ENCODE measurements at regions of chr1 and their contacts with region 1.

Region 1: GRCh38 chr1:101567582-101568189 is 330.9 kb downstream of the S1PR1 start:
- DNase-seq: peak; percentile 25
- CTCF ChIP-seq: peak; percentile 90

Region 2: DNA sequence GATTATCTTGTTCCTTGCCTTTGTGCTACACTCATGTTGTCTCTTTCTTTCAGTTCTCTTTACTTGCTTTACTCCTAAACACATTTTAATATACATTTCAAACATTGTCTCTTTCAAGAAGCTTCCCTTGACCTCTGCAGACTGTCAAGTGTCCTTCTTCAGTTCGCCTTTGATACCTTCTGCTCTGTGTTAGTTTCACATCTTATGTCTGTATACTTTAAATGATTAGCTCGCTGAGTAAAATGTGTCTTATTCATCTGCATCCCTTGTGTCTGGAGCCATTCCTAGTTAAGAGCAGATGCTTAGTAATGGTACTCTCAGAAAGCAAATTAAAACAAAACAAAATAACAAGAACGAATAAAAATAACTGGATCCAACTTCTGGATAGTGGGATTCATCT is 27.5 kb before region 1 on chr1:
- CTCF ChIA-PET with region 1: interaction called, 10 read pairs
- POLR2A ChIA-PET with region 1: no interaction called
- DNase-seq: no peak
- CTCF ChIP-seq: no peak

Region 3: DNA sequence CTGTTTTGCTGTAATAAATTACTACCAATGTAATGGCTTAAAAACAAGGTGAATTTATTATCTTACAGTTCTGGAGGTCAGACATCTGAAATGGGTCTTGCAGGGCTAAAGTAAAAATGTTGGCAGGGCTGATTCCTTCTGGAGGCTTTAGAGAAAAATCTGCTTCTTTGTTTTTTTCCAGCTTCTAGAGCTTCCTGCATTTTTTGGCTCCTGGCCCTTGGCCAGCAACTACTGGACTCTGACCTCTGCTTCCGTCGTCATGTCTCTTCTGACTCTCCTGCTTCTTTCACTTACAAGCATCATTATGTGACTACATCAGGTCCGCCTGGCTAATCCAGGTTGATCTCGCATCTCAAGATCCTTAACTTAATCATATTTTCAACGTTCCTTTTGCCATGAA is 20.1 kb after region 1 on chr1:
- CTCF ChIA-PET with region 1: no interaction called
- POLR2A ChIA-PET with region 1: no interaction called
- DNase-seq: no peak
- CTCF ChIP-seq: no peak

Measured in GM10248 (cell line).